ENCODE measurements at regions of chr6 and their contacts with region 1.

Region 1: DNA sequence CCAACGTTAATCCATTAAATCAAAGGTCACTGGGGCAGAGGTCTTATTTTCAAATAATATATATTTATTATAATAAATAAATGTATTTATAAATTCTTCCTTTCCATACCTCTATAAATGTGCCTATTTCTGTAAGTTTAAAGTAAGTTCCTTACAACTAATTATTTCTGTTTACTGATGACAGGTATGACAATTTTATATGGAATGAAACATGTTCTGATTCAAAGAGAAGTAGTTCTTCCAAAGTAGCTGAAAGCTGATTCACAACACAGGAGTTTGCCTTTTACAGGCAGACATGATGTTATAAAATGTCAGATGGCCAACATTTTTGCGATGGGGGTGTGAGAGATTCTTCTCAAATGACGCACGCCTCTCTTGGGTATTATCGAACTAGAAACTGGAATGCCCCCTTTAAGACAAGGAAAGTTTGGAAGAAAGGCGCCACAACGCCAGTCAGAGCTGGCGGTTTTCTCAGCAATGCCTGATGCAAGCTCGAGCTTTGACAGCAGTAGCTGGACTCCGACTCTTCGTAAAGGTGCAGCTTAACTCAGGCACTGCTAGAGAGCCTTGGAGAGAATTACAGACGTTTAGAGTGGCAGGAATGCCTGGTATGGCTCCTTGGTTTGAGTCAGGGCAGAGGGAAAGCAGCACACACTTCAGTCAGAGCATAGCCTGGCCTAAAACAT is 92.1 kb downstream of the FOXC1 start:
- DNase-seq: peak; percentile 24

Region 2: GRCh38 chr6:1596088-1596852 is 105.5 kb before region 1 on chr6:
- CTCF ChIA-PET with region 1: no interaction called
- POLR2A ChIA-PET with region 1: interaction called, 11 read pairs
- DNase-seq: peak; percentile 73

Region 3: DNA sequence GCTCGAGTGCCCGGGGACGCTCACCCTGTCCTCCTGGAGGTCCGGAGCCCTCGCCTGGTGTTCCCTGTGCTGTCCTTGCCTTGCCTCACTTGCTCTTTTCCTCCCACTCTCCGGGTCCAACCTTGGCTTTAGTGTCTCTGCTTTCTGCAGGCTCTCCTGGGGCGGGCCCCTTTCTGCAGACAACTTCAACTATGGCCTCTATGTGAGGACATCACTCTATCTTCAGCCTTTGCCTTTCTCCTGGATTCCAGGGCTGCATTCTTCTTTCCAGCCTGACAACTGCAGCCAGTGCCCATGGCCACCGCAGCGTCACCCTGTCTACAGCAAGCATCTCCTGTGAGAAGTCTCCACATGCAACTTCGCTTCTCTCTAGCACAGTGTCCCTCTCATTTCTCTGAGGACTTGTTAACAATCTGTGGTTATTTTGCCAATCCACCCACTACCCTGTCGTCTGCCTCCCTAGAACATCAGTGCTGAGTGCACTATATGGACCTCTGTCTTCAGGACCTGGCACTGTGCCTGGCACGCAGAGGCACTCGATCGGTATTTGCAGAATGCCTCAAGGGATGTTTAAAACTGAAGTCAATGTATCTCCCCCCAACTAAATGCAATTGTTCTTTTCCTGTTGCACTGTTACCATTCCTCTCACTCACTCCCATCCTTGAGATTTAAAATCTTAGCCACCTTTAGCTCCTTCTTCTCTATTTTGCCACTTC is 56.2 kb before region 1 on chr6:
- CTCF ChIA-PET with region 1: no interaction called
- POLR2A ChIA-PET with region 1: no interaction called
- DNase-seq: no peak

Region 4: GRCh38 chr6:1686117-1687098 is 15.4 kb before region 1 on chr6:
- CTCF ChIA-PET with region 1: interaction called, 14 read pairs
- POLR2A ChIA-PET with region 1: interaction called, 6 read pairs
- DNase-seq: no peak

Region 5: GRCh38 chr6:1970151-1970561 is 268.3 kb after region 1 on chr6:
- CTCF ChIA-PET with region 1: no interaction called
- POLR2A ChIA-PET with region 1: no interaction called
- DNase-seq: no peak

Region 6: DNA sequence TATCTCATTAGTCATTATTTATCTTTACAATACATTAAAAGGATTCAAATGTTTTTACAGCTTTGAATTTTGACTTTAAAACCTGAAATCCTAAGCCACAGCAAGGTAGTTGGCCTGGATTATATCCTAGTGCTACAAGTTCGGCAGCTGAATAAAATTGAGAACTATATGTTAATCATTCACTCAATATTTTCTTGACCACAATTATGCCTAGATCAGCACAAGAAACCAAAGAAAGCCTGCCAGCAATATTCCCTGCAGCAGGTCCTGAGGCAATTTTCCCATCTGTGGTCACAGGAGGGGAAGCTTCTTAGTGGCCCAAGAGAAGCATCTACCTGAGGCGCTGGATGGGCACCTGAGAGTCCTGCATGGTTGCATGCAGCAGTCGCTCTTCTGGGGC is 360.1 kb after region 1 on chr6:
- CTCF ChIA-PET with region 1: no interaction called
- POLR2A ChIA-PET with region 1: no interaction called
- DNase-seq: no peak

Measured in HEK293T (cell line).